ENCODE measurements at regions of chr1 and their contacts with region 1.

Region 1: DNA sequence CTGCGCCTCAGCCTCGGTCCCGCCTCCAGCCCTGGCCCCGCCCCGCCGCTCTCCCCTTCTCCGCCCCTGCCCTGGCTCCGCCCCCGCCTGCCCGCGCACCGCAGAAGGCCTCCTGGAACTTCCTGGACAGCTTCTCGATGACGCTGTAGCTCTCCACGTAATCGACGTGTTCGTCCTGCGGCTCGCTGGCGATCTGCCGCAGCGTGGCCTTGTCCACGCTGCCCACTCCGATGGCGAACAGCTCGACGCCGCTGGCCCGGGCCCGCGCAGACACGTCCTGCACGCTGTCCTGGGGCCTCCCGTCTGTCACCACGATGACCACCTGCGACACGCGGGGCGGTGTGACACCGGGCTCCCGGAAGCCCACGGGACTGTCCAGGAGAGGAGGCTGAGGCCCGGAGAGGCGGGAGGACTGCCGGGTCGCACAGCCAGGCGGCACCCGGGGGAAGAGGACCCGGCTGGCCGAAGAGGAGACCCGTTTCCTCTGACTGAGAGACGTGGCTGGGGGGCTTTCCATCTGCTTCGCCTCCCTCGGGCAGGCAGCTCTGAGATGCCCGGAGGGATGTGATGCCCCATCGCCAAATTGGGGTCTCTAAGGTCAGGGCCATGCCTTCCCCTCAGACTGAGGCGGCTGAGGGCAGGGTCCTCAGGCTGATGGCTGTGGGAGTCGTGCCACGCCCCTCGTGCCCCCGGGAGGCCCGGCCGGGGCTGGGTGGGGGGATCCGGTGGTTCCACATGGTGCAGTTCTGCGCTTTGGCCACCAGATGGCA is 4.6 kb downstream of the MATN1 start:
- DNase-seq: peak; percentile 88
- H3K4me3 Mint-ChIP-seq: peak overlapping the region; percentile 84
- H3K27ac Mint-ChIP-seq: peak overlapping the region; percentile 93
- H3K4me1 Mint-ChIP-seq: peaks cover 26% of the 10 kb centered on the region
- H3K27me3 Mint-ChIP-seq: no peaks in the 10 kb centered on the region

Region 2: GRCh38 chr1:30286241-30286987 is 432.4 kb before region 1 on chr1:
- CTCF ChIA-PET with region 1: no interaction called
- POLR2A ChIA-PET with region 1: no interaction called
- intact Hi-C with region 1: no loop called
- DNase-seq: no peak
- H3K4me3 Mint-ChIP-seq: no peak overlapping the region
- H3K27ac Mint-ChIP-seq: no peak overlapping the region
- H3K4me1 Mint-ChIP-seq: peaks cover 10% of the 10 kb centered on the region
- H3K27me3 Mint-ChIP-seq: peaks cover 22% of the 10 kb centered on the region

Region 3: GRCh38 chr1:30732277-30732996 is 13.6 kb after region 1 on chr1:
- CTCF ChIA-PET with region 1: interaction called, 19 read pairs
- POLR2A ChIA-PET with region 1: interaction called, 6 read pairs
- intact Hi-C with region 1: no loop called
- DNase-seq: no peak
- H3K4me3 Mint-ChIP-seq: no peak overlapping the region
- H3K27ac Mint-ChIP-seq: peak overlapping the region; percentile 43
- H3K4me1 Mint-ChIP-seq: peaks cover 12% of the 10 kb centered on the region
- H3K27me3 Mint-ChIP-seq: no peaks in the 10 kb centered on the region

Region 4: GRCh38 chr1:30756545-30757195 is 37.8 kb after region 1 on chr1:
- CTCF ChIA-PET with region 1: interaction called, 123 read pairs
- POLR2A ChIA-PET with region 1: interaction called, 19 read pairs
- intact Hi-C with region 1: loop called (anchors 2 kb)
- DNase-seq: peak; percentile 88
- H3K4me3 Mint-ChIP-seq: peak overlapping the region; percentile 98
- H3K27ac Mint-ChIP-seq: peak overlapping the region; percentile 99
- H3K4me1 Mint-ChIP-seq: peaks cover 86% of the 10 kb centered on the region
- H3K27me3 Mint-ChIP-seq: no peaks in the 10 kb centered on the region

Region 5: GRCh38 chr1:30779294-30780071 is 60.7 kb after region 1 on chr1:
- CTCF ChIA-PET with region 1: interaction called, 445 read pairs
- POLR2A ChIA-PET with region 1: interaction called, 29 read pairs
- intact Hi-C with region 1: loop called (anchors 1 kb)
- DNase-seq: peak; percentile 96
- H3K4me3 Mint-ChIP-seq: no peak overlapping the region
- H3K27ac Mint-ChIP-seq: no peak overlapping the region
- H3K4me1 Mint-ChIP-seq: peaks cover 5% of the 10 kb centered on the region
- H3K27me3 Mint-ChIP-seq: no peaks in the 10 kb centered on the region

Region 6: DNA sequence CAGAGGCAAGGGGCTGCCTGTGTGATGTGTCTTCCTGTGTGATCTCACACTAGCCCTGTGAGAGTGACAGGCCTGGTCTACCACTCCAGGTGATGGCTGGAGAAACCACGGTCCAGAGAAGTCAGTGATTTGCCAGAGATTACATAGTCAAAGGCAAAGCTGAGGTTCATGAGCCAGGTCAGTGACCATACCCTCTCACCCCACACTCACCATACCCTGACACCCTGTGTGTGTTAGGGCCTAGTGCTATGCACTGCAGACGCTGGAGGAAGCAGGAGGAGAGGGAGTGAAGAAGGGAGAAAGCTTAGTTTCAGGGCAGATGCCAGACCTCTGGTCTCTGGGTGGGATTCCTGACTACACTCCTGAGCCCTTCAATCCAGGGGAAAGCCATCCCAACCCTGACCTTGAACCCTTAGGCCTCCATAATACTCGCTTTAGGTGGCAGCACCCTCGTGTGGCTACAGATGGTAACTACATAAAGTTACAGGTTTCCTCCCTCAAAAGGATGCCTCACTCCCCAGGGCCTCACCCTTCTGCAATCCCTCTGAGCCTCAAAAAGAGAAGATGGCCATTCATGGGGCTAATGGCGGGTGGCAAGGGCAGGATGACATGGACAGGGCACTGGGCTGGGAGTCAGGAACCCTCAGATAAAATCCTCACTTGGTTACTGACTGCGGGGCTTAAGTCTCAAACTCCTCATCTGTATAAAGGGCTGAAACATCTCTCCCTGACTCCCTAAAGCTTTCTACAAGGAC is 210.5 kb after region 1 on chr1:
- CTCF ChIA-PET with region 1: interaction called, 17 read pairs
- POLR2A ChIA-PET with region 1: no interaction called
- intact Hi-C with region 1: loop called (anchors 1 kb)
- DNase-seq: peak; percentile 60
- H3K4me3 Mint-ChIP-seq: no peak overlapping the region
- H3K27ac Mint-ChIP-seq: no peak overlapping the region
- H3K4me1 Mint-ChIP-seq: no peaks in the 10 kb centered on the region
- H3K27me3 Mint-ChIP-seq: no peaks in the 10 kb centered on the region